ENCODE measurements at regions of chr7 and their contacts with region 1.

Region 1: DNA sequence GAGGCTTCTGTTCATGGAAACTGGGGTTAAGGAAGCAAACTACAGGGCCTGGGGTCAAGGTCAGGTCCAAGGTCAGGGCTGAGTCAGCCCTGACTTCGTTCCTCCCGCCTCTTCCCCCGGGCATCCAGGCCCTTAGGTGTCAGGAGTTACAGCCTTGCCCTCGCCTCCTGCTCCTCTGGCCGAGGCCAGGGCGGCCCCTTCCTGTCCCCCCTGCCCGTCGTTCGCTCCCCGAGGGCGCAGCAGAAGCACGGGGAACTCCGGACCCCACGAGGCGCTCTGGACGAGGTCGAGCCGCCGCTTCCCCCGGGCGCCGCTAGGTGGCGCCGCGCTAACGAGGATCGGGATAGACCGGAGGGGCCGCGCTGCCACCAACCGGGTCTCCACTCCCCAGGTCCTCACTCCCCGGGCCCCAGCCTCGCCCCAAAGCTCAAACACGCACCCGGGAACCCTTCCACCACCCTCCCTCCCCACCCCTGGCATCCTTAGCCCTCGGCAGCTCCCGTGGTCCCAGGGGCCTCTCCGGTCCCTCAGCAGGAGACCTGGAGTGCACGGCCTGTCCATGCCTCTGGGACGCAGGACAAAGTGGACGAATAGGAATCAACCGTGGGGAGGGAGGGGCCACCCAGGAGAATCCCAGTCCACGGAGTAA is 59.2 kb upstream of the MYL10 start:
- DNase-seq: peak; percentile 91
- ATAC-seq: peak; percentile 95

Region 2: GRCh38 chr7:101804088-101804963 is 116.0 kb after region 1 on chr7:
- intact Hi-C with region 1: no loop called
- DNase-seq: no peak
- ATAC-seq: no peak

Region 3: DNA sequence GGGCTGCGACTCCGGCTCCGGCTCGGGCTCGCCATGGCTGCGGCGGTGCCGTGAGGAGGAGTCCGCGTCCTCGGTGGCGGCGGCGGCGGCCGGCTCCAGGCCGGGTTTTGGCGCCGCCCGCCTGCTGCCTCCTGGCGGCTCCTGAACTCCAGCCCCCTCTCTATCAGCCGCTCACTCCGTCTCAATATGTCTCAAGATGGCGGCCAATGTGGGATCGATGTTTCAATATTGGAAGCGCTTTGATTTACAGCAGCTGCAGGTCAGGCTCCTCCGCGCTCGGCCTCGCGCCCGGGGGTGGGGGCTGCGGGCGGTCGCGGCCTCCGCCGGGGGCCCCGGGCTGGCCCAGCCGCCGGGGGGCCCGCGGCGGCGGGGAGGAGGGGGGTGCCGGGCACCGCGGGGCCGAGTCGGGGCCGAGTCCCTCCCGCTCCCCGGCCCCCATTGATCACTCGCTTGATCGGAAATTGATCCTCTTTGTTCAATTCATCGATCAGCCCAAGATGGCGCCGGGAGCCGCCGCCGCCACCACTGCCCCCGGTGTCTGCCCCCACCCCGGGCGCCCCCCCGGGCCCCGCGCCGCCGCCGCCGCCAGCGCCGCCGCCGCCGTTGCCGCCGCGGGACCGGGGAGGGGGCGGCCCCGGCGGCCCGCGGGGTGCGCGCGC is 127.7 kb after region 1 on chr7:
- intact Hi-C with region 1: loop called (anchors 2 kb)
- DNase-seq: peak; percentile 84
- ATAC-seq: peak; percentile 86

Region 4: DNA sequence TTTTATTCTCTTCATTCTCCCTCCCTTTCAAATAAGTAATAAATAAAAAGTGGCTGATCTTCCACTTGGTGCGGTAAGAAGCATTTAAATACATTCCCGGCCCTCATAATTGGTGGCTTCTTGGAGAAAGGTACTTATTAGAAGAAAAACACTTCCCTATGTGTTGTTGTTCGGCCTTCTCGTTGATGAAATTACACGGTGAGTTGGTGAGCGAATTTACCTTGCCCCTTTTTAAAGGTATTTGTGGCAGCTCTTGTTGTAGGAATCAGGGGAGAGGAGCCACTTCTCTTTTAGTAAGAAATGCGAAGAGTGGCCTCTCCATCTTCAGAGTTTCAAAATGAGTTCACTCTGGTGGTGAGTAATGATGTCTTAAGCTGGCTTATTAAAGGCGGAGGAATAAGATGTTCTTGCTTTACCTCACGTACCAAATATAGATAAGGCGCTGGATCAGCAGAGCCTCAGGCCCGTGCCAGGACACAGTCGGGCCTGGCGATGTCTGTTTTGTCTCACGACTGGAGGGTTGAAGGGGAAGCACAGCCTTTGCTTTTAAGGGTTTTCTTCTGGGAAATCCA is 265.0 kb after region 1 on chr7:
- intact Hi-C with region 1: no loop called
- DNase-seq: peak; percentile 53
- ATAC-seq: peak; percentile 58

Region 5: DNA sequence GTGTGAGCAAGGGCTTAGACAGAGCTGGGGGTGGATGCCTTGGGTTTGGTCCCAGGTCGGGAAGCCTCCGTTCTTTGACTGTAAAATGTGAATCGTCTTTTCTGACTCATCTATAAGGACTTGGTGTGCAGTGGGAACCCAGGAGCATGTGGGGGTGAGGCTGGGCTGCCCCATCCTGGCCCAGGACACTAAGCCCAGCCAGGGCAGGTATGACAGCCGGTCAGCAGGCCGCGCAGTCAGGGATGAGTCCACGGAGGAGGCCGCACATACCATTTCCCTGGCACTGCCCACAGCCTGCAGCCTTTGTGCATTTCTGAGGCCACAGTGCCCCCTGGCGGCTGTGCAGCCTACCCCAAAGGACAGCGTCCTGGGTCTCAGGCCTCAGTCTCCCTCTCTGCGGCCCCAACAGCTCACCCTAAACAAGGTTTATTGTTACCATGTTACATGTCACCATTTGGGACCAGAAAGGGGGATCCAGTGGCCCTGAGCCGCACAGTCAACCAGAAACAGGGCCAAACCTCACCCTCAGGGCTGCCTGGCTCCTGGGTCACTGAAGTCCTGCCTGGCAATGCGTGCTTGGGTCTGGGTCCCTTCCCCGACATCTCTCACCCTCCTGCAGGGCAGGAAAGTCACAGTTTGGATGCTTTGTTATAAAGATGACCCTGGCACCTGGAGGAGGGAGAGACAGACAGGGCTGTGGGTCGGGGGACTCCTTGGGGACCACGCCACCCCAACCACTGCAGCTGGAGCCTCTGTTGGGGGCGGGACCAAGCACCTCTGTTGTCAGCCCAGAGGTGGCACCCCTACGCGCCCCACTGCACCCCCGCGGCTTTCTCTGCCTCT is 584.0 kb after region 1 on chr7:
- intact Hi-C with region 1: loop called (anchors 5 kb)
- DNase-seq: peak; percentile 91
- ATAC-seq: peak; percentile 94

Measured in Right ventricle myocardium superior (tissue), 1 donor.